HCT116 (cell line): ENCODE measurements at regions of chr13 and their contacts with region 1.

Region 1: GRCh38 chr13:114065141-114065925 is 67.1 kb downstream of the RASA3 start:
- DNase-seq: peak; percentile 90
- ATAC-seq: peak; percentile 85
- H3K4me3 ChIP-seq: peak overlapping the region; percentile 50 to 63
- H3K27ac ChIP-seq: peak overlapping the region; percentile 99
- H3K4me1 ChIP-seq: peaks cover 31 to 44% of the 10 kb centered on the region in 2 experiments
- H3K27me3 ChIP-seq: no peaks in the 10 kb centered on the region
- CTCF ChIP-seq: no peak
- POLR2A ChIP-seq: peak; percentile 4
- RAD21 ChIP-seq: no peak

Region 2: DNA sequence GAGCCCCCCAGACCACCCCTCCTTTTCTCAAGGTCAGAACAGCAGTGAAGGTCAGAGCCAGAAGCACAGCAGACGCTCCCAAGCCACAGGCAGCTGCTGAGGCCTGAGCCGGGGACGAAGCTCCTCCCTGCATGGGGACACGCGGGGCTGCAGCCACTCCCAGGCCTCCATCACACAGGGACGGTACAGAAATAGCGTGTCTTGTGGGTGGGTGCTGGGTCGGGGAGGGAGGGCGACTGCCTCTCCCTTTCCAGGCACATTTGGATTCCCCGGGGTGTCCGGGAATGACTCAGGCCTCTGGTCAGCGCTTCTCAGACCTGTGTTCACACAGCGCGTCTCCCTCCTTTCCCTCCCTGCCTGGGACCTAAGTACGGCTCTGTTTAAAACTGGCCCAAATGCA is 33.9 kb after region 1 on chr13:
- CTCF ChIA-PET with region 1: no interaction called
- POLR2A ChIA-PET with region 1: interaction called, 6 read pairs
- RAD21 ChIA-PET with region 1: interaction called, 3 read pairs
- intact Hi-C with region 1: loop called (anchors 2 kb)
- DNase-seq: peak; percentile 45
- ATAC-seq: peak; percentile 90
- H3K4me3 ChIP-seq: no peak overlapping the region
- H3K27ac ChIP-seq: peak overlapping the region; percentile 13; the same call in 1 of the 2 replicates
- H3K4me1 ChIP-seq: peaks cover 0 to 13% of the 10 kb centered on the region in 2 experiments; a peak in 2 of 4 replicates
- H3K27me3 ChIP-seq: no peaks in the 10 kb centered on the region
- CTCF ChIP-seq: no peak
- POLR2A ChIP-seq: no peak
- RAD21 ChIP-seq: no peak

Region 3: DNA sequence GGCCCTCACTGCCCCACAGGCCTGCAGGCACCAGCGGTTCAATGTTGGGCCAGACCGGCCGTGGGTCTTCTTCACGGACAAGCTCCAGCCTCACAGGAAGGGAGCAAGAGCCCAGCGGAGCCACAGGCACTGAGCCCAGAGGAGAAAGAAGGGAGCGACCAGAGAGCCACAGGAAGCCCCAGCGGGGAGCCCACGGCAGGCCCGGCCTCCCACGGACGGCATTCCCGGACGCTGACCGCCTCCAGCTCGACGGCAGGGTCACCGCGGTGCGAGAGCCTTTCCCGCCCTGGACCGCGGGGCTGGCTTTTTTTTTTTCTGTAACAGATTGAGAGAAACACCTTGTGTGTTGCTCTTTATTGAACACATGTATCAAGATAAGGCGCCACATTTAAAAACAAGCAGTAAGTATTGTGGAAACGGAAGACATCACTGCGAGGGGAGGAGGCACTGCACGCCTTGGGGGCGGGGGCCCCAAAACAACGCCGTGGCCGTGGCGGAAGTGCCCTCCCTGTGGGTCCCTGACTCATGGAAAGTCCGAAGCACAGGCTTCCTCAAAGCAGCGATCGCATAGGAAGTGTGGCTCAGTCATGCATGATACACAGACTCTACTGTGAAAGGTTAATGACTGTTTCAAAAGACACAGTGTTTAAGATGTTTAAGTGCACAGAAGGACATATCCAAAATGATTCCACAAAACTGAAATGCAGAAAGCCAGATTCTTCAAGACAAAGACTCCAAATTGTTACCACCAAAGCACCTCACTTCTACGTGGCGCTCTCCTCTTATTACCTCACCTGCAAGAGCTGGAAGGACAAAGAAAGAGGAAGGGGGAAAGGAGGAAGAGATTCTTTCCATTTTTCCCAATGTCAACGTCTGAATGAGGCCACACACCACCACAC is 63.5 kb after region 1 on chr13:
- CTCF ChIA-PET with region 1: no interaction called
- POLR2A ChIA-PET with region 1: no interaction called
- RAD21 ChIA-PET with region 1: no interaction called
- intact Hi-C with region 1: loop called (anchors 2 kb)
- DNase-seq: peak; percentile 72
- ATAC-seq: peak; percentile 50
- H3K4me3 ChIP-seq: peak overlapping the region; percentile 36 to 50
- H3K27ac ChIP-seq: peak overlapping the region; percentile 60
- H3K4me1 ChIP-seq: peaks cover 30 to 50% of the 10 kb centered on the region in 2 experiments
- H3K27me3 ChIP-seq: no peaks in the 10 kb centered on the region
- CTCF ChIP-seq: no peak
- POLR2A ChIP-seq: no peak
- RAD21 ChIP-seq: no peak